ENCODE measurements at regions of chr9 and their contacts with region 1.

Region 1: GRCh38 chr9:32384364-32385151 is at the start of gene ACO1:
- DNase-seq: peak; percentile 74 to 93 (median 87)
- ATAC-seq: peak; percentile 98
- H3K4me3 ChIP-seq: peak within 1 kb of the TSS; percentile 81 to 90
- H3K4me3 Mint-ChIP-seq: peak within 1 kb of the TSS; percentile 84
- H3K27ac ChIP-seq: peak within 1 kb of the TSS; percentile 21 to 45
- H3K27ac Mint-ChIP-seq: peak within 1 kb of the TSS; percentile 55
- H3K4me1 ChIP-seq: peaks cover 17% of the 10 kb centered on the region
- H3K4me1 Mint-ChIP-seq: peaks cover 22% of the 10 kb centered on the region
- H3K27me3 ChIP-seq: no peaks in the 10 kb centered on the region
- H3K27me3 Mint-ChIP-seq: peaks cover 5% of the 10 kb centered on the region
- CTCF ChIP-seq: no peak
- total RNA-seq, gene ACO1: 3.1 to 3.6 TPM

Region 2: DNA sequence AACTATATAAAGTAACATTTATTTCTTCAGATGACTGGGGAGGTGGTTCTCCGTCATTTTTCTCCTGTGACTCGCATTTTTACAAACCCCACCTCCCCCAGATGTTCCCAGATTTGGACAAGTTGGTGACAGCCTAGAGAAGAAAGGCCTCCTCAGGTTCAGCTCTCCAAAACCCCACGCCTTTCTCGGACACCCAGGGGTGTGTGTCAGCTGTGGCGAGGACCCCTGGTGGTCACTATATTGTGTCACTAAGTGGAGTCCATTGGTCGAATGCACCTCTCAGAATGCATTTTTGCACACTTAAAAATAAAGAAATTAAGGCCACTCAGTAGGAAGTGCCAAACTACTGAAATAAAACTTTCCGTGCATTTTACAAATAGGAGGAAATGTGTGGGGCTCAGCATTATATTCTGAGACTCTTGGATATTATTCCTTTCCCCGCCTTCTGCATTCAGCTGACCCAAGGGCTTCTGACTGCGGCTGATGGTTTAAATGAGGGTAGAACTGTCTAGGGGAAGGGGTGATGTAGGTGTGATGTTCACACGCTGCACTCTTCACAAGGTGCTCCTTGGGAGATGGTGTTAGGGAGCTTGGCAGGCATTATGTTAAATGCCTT is 47.5 kb after region 1 on chr9:
- CTCF ChIA-PET with region 1: interaction called, 104 read pairs
- POLR2A ChIA-PET with region 1: interaction called, 4 read pairs
- intact Hi-C with region 1: loop called in 1 of 2 experiments (anchors 1 kb)
- DNase-seq: peak in 8 of 9 experiments; percentile 5 to 57 (median 50)
- ATAC-seq: peak; percentile 46
- H3K4me3 ChIP-seq: no peak overlapping the region
- H3K4me3 Mint-ChIP-seq: no peak overlapping the region
- H3K27ac ChIP-seq: no peak overlapping the region
- H3K27ac Mint-ChIP-seq: no peak overlapping the region
- H3K4me1 ChIP-seq: no peaks in the 10 kb centered on the region
- H3K4me1 Mint-ChIP-seq: no peaks in the 10 kb centered on the region
- H3K27me3 ChIP-seq: no peaks in the 10 kb centered on the region
- H3K27me3 Mint-ChIP-seq: no peaks in the 10 kb centered on the region
- CTCF ChIP-seq: peak; percentile 40

Region 3: GRCh38 chr9:32526041-32526706 is 141.6 kb after region 1 on chr9 and contains the start of gene RIGI:
- CTCF ChIA-PET with region 1: interaction called, 91 read pairs
- POLR2A ChIA-PET with region 1: interaction called, 16 read pairs
- intact Hi-C with region 1: loop called (anchors 1 to 5 kb)
- DNase-seq: peak; percentile 47 to 94 (median 80)
- ATAC-seq: peak; percentile 79
- H3K4me3 ChIP-seq: peak within 1 kb of the TSS; percentile 79 to 85
- H3K4me3 Mint-ChIP-seq: peak within 1 kb of the TSS; percentile 98
- H3K27ac ChIP-seq: peak within 1 kb of the TSS; percentile 85 to 86
- H3K27ac Mint-ChIP-seq: peak within 1 kb of the TSS; percentile 98
- H3K4me1 ChIP-seq: peaks cover 22% of the 10 kb centered on the region
- H3K4me1 Mint-ChIP-seq: peaks cover 55% of the 10 kb centered on the region
- H3K27me3 ChIP-seq: no peaks in the 10 kb centered on the region
- H3K27me3 Mint-ChIP-seq: no peaks in the 10 kb centered on the region
- CTCF ChIP-seq: peak; percentile 60
- total RNA-seq, gene RIGI: 3.4 to 3.9 TPM

Region 4: GRCh38 chr9:32550562-32551433 is 166.2 kb after region 1 on chr9:
- CTCF ChIA-PET with region 1: interaction called, 42 read pairs
- POLR2A ChIA-PET with region 1: interaction called, 13 read pairs
- intact Hi-C with region 1: loop called (anchors 1 kb)
- DNase-seq: peak; percentile 90 to 99 (median 96)
- ATAC-seq: peak; percentile 85
- H3K4me3 ChIP-seq: peak overlapping the region; percentile 85 to 87
- H3K4me3 Mint-ChIP-seq: peak overlapping the region; percentile 94
- H3K27ac ChIP-seq: peak overlapping the region; percentile 91 to 97
- H3K27ac Mint-ChIP-seq: peak overlapping the region; percentile 99
- H3K4me1 ChIP-seq: peaks cover 23% of the 10 kb centered on the region
- H3K4me1 Mint-ChIP-seq: peaks cover 57% of the 10 kb centered on the region
- H3K27me3 ChIP-seq: no peaks in the 10 kb centered on the region
- H3K27me3 Mint-ChIP-seq: no peaks in the 10 kb centered on the region
- CTCF ChIP-seq: peak; percentile 19

Measured in CD8-positive, alpha-beta T cell (primary cell).